Activated CD8-positive, alpha-beta T cell treated with anti-CD3 and anti-CD28 coated beads, Interleukin-2, amount 10 ng/mL, durations not matched to agents 7 days and 5 days (primary cell): ENCODE measurements at regions of chr10 and their contacts with region 1.

Region 1: DNA sequence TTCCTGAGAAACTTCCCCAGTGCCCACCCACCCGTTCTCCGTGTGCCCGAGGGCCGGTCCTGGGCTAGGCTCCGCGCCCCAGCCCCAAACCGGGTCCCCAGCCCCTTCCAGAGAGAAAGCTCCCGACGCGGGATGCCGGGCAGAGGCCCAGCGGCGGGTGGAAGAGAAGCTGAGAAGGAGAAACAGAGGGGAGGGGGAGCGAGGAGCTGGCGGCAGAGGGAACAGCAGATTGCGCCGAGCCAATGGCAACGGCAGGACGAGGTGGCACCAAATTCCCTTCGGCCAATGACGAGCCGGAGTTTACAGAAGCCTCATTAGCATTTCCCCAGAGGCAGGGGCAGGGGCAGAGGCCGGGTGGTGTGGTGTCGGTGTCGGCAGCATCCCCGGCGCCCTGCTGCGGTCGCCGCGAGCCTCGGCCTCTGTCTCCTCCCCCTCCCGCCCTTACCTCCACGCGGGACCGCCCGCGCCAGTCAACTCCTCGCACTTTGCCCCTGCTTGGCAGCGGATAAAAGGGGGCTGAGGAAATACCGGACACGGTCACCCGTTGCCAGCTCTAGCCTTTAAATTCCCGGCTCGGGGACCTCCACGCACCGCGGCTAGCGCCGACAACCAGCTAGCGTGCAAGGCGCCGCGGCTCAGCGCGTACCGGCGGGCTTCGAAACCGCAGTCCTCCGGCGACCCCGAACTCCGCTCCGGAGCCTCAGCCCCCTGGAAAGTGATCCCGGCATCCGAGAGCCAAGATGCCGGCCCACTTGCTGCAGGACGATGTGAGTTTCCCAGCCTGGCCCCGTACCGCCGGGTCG is at the start of gene SCD:
- DNase-seq: peak; percentile 95
- ATAC-seq: peak; percentile 94
- H3K4me3 Mint-ChIP-seq: peak within 1 kb of the TSS; percentile 96
- H3K27ac Mint-ChIP-seq: peak within 1 kb of the TSS; percentile 90
- H3K4me1 Mint-ChIP-seq: peaks cover 67% of the 10 kb centered on the region
- H3K27me3 Mint-ChIP-seq: no peaks in the 10 kb centered on the region
- total RNA-seq, gene SCD: 239 to 240 TPM

Region 2: GRCh38 chr10:100209303-100209702 is 137.7 kb before region 1 on chr10:
- CTCF ChIA-PET with region 1: no interaction called
- POLR2A ChIA-PET with region 1: no interaction called
- DNase-seq: no peak
- ATAC-seq: no peak
- H3K4me3 Mint-ChIP-seq: no peak overlapping the region
- H3K27ac Mint-ChIP-seq: no peak overlapping the region
- H3K4me1 Mint-ChIP-seq: no peaks in the 10 kb centered on the region
- H3K27me3 Mint-ChIP-seq: no peaks in the 10 kb centered on the region

Region 3: GRCh38 chr10:100359529-100360150 is 12.7 kb after region 1 on chr10:
- CTCF ChIA-PET with region 1: interaction called, 4 read pairs
- POLR2A ChIA-PET with region 1: interaction called, 10 read pairs
- DNase-seq: no peak
- ATAC-seq: no peak
- H3K4me3 Mint-ChIP-seq: no peak overlapping the region
- H3K27ac Mint-ChIP-seq: peak overlapping the region; percentile 65
- H3K4me1 Mint-ChIP-seq: peaks cover 42% of the 10 kb centered on the region
- H3K27me3 Mint-ChIP-seq: no peaks in the 10 kb centered on the region

Region 4: DNA sequence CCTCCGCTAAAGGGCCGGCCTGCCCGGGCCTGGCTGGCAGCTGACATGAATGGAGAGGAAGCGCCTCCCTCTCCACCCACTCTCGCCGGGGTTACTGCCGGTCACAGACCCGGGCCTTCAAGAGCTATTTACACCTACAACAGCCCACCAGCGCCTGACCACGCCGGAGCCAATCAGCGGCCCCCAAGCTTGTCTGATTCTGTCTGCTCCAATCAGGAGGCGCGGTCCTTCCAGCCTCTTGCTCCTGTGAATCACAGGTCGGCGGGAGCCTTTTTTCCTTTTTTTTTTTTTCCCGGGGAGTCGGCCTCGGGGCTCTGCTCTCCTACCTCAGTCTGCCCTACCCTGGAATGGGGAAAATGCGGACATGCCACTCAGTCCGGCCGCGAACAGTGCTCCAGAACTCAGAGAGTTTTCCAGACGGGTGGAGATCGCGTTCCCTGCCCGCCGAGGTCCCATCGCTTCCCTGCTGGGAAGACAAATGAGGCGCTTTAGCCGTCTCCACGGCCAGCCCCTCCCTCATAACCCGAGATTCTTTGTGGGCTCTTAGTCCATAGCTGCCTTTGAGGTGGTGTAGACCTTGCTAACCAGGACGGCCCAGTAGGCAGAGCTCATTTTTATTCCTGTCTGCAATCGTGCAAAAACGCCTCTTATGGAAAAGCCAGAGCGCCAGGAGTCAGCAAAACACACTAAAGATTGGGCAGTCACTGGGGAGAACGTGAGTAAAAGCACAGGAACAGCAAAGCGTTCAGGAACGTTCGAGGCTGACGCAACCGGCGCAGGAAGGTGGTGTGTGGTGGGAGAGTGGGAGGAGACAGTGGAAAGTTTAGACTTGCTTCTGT is 26.6 kb after region 1 on chr10:
- CTCF ChIA-PET with region 1: interaction called, 48 read pairs
- POLR2A ChIA-PET with region 1: interaction called, 43 read pairs
- DNase-seq: peak; percentile 96
- ATAC-seq: peak; percentile 83
- H3K4me3 Mint-ChIP-seq: no peak overlapping the region
- H3K27ac Mint-ChIP-seq: no peak overlapping the region
- H3K4me1 Mint-ChIP-seq: peaks cover 50% of the 10 kb centered on the region
- H3K27me3 Mint-ChIP-seq: no peaks in the 10 kb centered on the region